ENCODE measurements at regions of chr15 and their contacts with region 1.

Region 1: DNA sequence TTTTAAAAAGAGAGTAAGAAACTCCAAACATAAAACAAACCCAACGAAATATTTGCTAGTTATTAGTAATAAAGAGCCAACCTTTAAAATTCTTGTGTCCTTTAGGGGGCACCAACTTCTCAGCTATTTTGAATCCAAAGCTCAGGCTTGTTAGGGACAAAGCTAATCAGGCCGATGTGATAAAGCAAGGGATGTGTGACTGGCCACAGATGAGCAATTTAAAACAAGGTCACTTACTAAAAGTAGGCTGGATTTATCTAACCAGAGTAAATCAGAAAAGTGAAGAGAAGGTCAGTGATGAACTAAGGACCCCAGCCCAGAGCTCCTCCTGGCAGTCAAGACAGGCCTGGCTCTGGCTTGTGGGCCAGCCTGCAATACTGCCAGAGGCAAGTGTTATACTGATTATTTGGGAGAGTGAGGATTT is 108.5 kb downstream of the CYP19A1 start:
- DNase-seq: peak; percentile 55
- H3K4me3 ChIP-seq: no peak overlapping the region
- H3K27ac ChIP-seq: no peak overlapping the region
- H3K4me1 ChIP-seq: peaks cover 0 to 7% (median 2%) of the 10 kb centered on the region in 4 donors
- H3K27me3 ChIP-seq: peaks cover 0 to 13% (median 0%) of the 10 kb centered on the region in 4 donors
- CTCF ChIP-seq: peak; percentile 22 to 39 (median 29)
- EP300 ChIP-seq: no peak
- POLR2A ChIP-seq: no peak

Region 2: DNA sequence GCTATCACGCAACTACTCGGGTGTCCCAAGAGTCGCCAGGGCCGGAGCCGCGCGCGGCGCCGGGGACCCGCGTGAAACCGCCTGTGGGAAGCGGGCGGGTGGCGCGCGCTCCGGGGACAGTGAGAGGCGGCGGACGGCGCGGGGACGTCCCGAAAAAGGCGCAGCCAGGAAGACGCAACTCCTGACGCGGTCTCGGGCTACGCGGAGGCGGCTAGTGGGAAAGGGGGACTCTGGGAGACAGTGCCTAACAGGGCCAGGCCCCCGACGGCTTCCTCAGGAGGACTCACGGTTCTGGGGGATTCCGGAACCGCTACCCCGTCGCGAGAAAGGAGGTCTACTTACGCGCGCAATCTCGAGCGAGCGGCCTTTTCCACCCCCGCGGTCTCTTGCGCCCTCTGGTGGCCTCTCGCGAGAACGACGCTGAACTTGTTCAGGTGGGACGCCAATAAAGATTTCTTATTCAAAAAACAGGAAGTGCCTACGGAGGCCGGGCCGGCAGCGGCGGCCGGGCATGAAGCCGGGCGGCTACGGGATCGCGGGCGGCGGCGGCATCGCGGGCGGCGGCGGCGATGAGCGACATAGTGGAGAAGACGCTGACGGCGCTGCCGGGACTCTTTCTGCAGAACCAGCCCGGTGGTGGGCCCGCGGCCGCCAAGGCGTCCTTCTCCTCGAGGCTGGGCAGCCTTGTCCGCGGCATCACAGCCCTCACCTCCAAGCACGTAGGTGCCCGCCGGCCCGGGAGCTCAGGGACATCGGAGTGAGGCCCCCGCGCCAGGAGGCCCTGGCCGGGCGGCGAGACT is 321.5 kb before region 1 on chr15 and contains the start of gene AP4E1:
- intact Hi-C with region 1: no loop called
- DNase-seq: peak; percentile 99
- H3K4me3 ChIP-seq: peak within 1 kb of the TSS; percentile 76 to 99 (median 96)
- H3K27ac ChIP-seq: peak within 1 kb of the TSS; percentile 90 to 95 (median 92)
- H3K4me1 ChIP-seq: peaks cover 33 to 36% (median 34%) of the 10 kb centered on the region in 4 donors
- H3K27me3 ChIP-seq: no peaks in the 10 kb centered on the region
- CTCF ChIP-seq: peak; percentile 96 to 99 (median 96)
- EP300 ChIP-seq: no peak
- POLR2A ChIP-seq: peak; percentile 35
- total RNA-seq, gene AP4E1: 9.9 to 13.2 (median 10.6) TPM

Region 3: GRCh38 chr15:51270706-51271105 is 40.8 kb after region 1 on chr15:
- intact Hi-C with region 1: no loop called
- DNase-seq: no peak
- H3K4me3 ChIP-seq: no peak overlapping the region
- H3K27ac ChIP-seq: no peak overlapping the region
- H3K4me1 ChIP-seq: peaks cover 6 to 18% (median 12%) of the 10 kb centered on the region in 4 donors
- H3K27me3 ChIP-seq: peaks cover 0 to 74% (median 3%) of the 10 kb centered on the region in 4 donors
- CTCF ChIP-seq: no peak
- EP300 ChIP-seq: no peak
- POLR2A ChIP-seq: no peak

Region 4: GRCh38 chr15:51380999-51381795 is 151.3 kb after region 1 on chr15:
- intact Hi-C with region 1: loop called (anchors 5 kb)
- DNase-seq: no peak
- H3K4me3 ChIP-seq: no peak overlapping the region
- H3K27ac ChIP-seq: no peak overlapping the region
- H3K4me1 ChIP-seq: peaks cover 6 to 32% (median 28%) of the 10 kb centered on the region in 4 donors
- H3K27me3 ChIP-seq: peaks cover 0 to 18% (median 0%) of the 10 kb centered on the region in 4 donors
- CTCF ChIP-seq: peak; percentile 85 to 89 (median 88)
- EP300 ChIP-seq: no peak
- POLR2A ChIP-seq: no peak

Region 5: GRCh38 chr15:51401872-51402517 is 172.1 kb after region 1 on chr15:
- intact Hi-C with region 1: loop called (anchors 5 kb)
- DNase-seq: peak; percentile 92
- H3K4me3 ChIP-seq: no peak overlapping the region
- H3K27ac ChIP-seq: no peak overlapping the region
- H3K4me1 ChIP-seq: peaks cover 0 to 8% (median 3%) of the 10 kb centered on the region in 4 donors
- H3K27me3 ChIP-seq: peaks cover 0 to 6% (median 0%) of the 10 kb centered on the region in 4 donors
- CTCF ChIP-seq: peak in 2 of 3 experiments; percentile 31 to 48
- EP300 ChIP-seq: no peak
- POLR2A ChIP-seq: no peak